H1 (cell line): ENCODE measurements at regions of chr6 and their contacts with region 1.

Region 1: DNA sequence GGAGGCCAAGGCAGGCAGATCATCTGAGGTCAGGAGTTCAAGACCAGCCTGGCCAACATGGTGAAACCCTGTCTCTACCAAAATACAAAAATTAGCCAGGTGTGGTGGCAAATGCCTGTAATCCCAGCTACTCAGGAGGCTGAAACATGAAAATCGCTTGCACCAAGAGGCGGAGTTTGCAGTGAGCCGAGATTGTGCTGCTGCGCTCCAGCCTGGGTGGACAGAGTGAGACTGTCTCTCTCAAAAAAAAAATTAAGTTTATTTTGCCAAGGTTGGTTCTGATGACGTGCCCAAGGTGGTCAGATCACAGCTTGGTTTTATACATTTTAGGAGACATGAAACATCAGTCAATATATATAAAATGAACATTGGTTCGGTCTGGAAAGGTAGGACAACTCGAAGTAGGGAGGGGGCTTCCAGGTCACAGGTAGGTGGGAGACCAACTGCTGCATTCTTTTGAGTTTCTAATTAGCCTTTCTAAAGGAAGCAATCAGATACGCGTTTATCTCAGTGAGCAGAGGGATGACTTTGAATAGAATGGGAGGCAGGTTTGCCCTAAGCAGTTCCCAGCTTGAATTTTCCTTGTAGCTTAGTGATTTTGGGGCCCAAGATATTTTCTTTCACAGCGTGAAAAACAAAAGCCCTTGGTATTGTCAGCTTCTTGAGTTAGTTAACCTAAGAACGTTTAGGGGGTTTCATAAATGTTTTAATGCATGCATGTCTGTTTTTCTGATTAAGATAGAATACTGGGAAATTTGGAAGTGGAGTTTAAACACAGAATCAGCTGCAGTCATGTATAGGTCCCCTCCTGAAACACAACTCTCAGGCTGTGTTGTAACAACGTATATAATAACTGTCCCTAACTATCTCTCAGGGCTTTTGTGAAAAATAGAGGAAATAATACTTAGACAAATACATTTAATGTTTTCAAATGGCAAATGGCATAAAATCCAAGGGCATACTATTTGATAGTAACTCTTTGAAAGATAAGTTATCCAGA is 16.7 kb downstream of the ACOT13 start:
- DNase-seq: no peak
- H3K4me3 ChIP-seq: peak overlapping the region in 1 of 4 experiments; percentile 46; a peak in 2 of 8 replicates
- H3K27ac ChIP-seq: no peak overlapping the region
- H3K4me1 ChIP-seq: peaks cover 3 to 19% (median 8%) of the 10 kb centered on the region in 4 experiments; a peak in 6 of 7 replicates
- H3K27me3 ChIP-seq: peaks cover 0 to 5% (median 0%) of the 10 kb centered on the region in 4 experiments; a peak in 1 of 7 replicates
- CTCF ChIP-seq: no peak
- EP300 ChIP-seq: peak in 1 of 2 experiments; percentile 51; a peak in 1 of 3 replicates
- POLR2A ChIP-seq: no peak
- RAD21 ChIP-seq: no peak

Region 2: DNA sequence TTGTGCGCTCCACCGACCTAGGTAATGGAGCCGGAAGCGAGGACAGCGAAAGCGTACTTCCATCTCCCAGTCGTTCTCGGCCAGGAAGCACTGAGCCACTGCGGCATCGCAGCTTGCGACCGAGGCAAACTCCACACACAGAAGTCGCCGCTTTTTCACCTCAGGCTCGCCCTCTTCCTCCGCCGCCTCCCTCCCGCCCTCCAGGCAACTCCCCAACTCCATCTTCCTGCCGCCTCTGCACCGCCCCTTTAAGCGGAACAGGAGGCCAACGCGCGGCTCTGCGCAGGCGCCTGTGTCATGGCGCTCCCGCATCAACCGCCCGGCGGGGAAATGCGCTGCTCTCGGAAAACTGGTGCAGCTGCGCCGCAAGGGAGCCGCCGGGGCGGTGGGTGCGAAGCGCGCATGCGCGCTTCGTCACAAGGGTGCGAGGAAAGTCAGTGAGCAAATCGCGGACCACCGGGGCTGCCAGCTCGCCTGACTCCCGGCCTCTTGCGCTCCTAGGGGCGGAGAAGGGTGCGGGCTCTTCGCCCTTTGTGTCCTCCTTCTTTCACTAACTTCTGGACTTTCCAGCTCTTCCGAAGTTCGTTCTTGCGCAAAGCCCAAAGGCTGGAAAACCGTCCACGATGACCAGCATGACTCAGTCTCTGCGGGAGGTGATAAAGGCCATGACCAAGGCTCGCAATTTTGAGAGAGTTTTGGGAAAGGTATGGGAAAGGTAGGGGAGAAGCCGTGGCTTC is 16.8 kb before region 1 on chr6 and contains the starts of genes ACOT13 and TDP2:
- CTCF ChIA-PET with region 1: interaction called, 6 read pairs
- POLR2A ChIA-PET with region 1: interaction called, 22 read pairs
- DNase-seq: peak; percentile 93 to 97
- H3K4me3 ChIP-seq: peak within 1 kb of the TSS; percentile 85 to 99 (median 93)
- H3K27ac ChIP-seq: peak within 1 kb of the TSS; percentile 92
- H3K4me1 ChIP-seq: peaks cover 0 to 5% (median 0%) of the 10 kb centered on the region in 4 experiments; a peak in 3 of 7 replicates
- H3K27me3 ChIP-seq: no peaks in the 10 kb centered on the region
- CTCF ChIP-seq: peak; percentile 47 to 63 (median 58)
- EP300 ChIP-seq: peak in 1 of 2 experiments; percentile 57; a peak in 1 of 3 replicates
- POLR2A ChIP-seq: peak; percentile 86 to 94
- RAD21 ChIP-seq: peak; percentile 47 to 63
- total RNA-seq, gene ACOT13: 40.6 and 42.8 TPM in 2 replicates
- total RNA-seq, gene TDP2: 51.6 and 52.6 TPM in 2 replicates